ENCODE measurements at regions of chr19 and their contacts with region 1.

Region 1: DNA sequence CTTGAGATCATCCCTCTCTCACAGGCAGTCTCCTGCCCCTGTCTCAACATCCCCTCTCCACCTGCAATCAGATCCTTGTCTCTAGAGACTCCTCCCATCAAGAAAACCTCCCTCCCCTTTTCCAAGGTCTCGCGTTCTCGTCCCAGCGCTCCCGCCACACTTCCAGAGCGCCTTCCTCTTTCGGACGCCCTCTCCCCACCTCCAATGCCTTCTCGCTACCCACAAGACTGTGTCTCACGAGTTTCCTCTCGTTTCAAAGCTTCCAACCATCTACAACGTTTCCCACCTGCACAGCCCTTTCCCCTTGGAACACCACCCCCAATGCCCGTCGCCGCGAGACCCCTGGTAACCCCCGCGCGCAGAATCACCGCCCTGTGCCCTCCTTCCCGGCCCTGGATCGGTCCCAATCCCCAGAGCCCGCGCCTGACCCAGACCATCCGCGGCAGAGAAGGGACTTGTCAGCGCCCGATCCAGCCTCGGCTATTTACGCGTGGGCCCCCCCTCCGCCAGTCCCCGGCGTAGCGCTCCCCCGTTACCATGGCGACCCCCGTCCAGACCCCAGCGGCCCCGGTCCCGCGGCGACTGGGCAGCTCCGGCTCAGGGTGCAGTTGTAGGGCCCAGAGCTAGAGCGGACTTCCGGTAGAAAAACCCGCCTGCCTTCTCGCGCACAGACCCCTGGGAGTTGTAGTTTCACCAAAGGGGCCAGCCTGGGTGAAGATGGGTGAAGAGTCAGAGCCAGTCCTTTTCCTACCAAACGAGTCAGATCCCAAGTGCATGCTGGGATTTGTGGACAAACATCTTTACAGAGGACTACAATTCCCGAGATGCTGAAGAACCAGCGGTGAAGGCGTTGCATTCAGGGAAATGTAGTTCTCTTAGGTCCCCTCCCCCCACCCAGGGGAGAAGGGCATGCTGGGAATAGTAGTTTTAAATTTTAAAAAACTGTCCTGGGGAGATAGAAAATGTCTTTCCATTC is at the start of gene AP2S1:
- DNase-seq: peak; percentile 93 to 99 (median 98)
- H3K4me3 ChIP-seq: peak within 1 kb of the TSS; percentile 58 to 97 (median 90)
- H3K27ac ChIP-seq: peak within 1 kb of the TSS in 57 of 59 donors; percentile 5 to 92 (median 78)
- H3K27me3 ChIP-seq: no peaks in the 10 kb centered on the region
- CTCF ChIP-seq: peak in 38 of 56 donors; percentile 7 to 62 (median 36)
- total RNA-seq, gene AP2S1: 73.1 to 190 (median 146) TPM

Region 2: GRCh38 chr19:47047763-47048405 is 197.4 kb after region 1 on chr19:
- intact Hi-C with region 1: loop called in 1 of 2 experiments (anchors 5 kb)
- DNase-seq: peak; percentile 63 to 97 (median 91)
- H3K4me3 ChIP-seq: peak overlapping the region; percentile 67 to 99 (median 94)
- H3K27ac ChIP-seq: peak overlapping the region in 54 of 59 donors; percentile 20 to 93 (median 82)
- H3K27me3 ChIP-seq: no peaks in the 10 kb centered on the region
- CTCF ChIP-seq: peak in 1 of 56 donors; percentile 2

Measured in dorsolateral prefrontal cortex (tissue), 120 donors.